WTC11 (cell line): ENCODE measurements at regions of chr17 and their contacts with region 1.

Region 1: GRCh38 chr17:49952209-49952911 is 16.6 kb upstream of the DLX4 start:
- DNase-seq: peak; percentile 95
- ATAC-seq: peak; percentile 94
- H3K4me3 Mint-ChIP-seq: no peak overlapping the region
- H3K27ac Mint-ChIP-seq: no peak overlapping the region
- H3K4me1 Mint-ChIP-seq: peaks cover 10% of the 10 kb centered on the region
- H3K27me3 Mint-ChIP-seq: peaks cover 26% of the 10 kb centered on the region
- CTCF ChIP-seq: peak; percentile 72

Region 2: GRCh38 chr17:49873466-49873865 is 78.9 kb before region 1 on chr17:
- CTCF ChIA-PET with region 1: interaction called, 12 read pairs
- POLR2A ChIA-PET with region 1: interaction called, 3 read pairs
- DNase-seq: no peak
- ATAC-seq: no peak
- H3K4me3 Mint-ChIP-seq: no peak overlapping the region
- H3K27ac Mint-ChIP-seq: peak overlapping the region; percentile 68
- H3K4me1 Mint-ChIP-seq: peaks cover 48% of the 10 kb centered on the region
- H3K27me3 Mint-ChIP-seq: no peaks in the 10 kb centered on the region; the same call in 1 of the 2 replicates
- CTCF ChIP-seq: no peak

Region 3: DNA sequence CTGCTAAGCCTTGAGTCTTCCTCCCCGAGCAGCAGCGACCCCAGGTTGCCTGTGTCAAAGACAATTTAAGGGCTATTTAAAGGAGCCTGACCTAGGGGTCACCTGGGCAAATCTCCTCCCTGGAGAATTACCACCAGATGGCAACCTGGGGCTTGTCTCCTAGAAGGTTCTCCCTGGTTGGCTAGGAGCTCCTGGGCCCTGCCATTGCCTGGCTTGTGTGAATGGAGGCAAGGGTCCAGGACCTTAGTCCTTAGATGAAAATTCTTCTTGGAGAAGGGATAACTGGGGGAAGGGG is 53.2 kb before region 1 on chr17:
- CTCF ChIA-PET with region 1: interaction called, 18 read pairs
- POLR2A ChIA-PET with region 1: no interaction called
- DNase-seq: peak; percentile 69
- ATAC-seq: peak; percentile 89
- H3K4me3 Mint-ChIP-seq: no peak overlapping the region
- H3K27ac Mint-ChIP-seq: no peak overlapping the region
- H3K4me1 Mint-ChIP-seq: peaks cover 26% of the 10 kb centered on the region
- H3K27me3 Mint-ChIP-seq: peaks cover 51% of the 10 kb centered on the region
- CTCF ChIP-seq: no peak

Region 4: DNA sequence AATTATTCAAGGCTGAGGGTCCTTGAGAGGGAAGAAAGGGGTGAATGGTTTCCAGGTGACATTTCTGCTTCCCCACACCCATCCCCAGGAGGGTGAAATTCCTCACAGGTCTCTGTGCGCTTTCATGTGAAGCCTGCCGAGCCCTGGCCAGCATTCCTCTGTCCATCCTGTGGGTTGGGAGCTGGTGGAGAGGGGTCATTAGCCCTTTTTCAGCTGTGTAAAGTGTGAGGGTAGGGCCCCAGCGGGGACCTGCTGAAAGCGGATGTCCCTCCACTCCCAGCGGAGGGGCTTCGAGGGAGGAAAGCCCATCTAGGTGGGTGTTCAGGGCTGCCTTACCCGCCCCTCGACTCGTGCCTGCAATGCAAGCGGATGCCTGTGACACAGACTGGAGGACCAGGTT is 36.7 kb before region 1 on chr17:
- CTCF ChIA-PET with region 1: interaction called, 30 read pairs
- POLR2A ChIA-PET with region 1: no interaction called
- DNase-seq: peak; percentile 38
- ATAC-seq: peak; percentile 56
- H3K4me3 Mint-ChIP-seq: no peak overlapping the region
- H3K27ac Mint-ChIP-seq: no peak overlapping the region
- H3K4me1 Mint-ChIP-seq: peaks cover 22% of the 10 kb centered on the region
- H3K27me3 Mint-ChIP-seq: peaks cover 56% of the 10 kb centered on the region
- CTCF ChIP-seq: no peak

Region 5: GRCh38 chr17:49932138-49932723 is 20.1 kb before region 1 on chr17:
- CTCF ChIA-PET with region 1: interaction called, 11 read pairs
- POLR2A ChIA-PET with region 1: no interaction called
- DNase-seq: no peak
- ATAC-seq: no peak
- H3K4me3 Mint-ChIP-seq: no peak overlapping the region
- H3K27ac Mint-ChIP-seq: no peak overlapping the region
- H3K4me1 Mint-ChIP-seq: peaks cover 12% of the 10 kb centered on the region
- H3K27me3 Mint-ChIP-seq: peaks cover 16% of the 10 kb centered on the region
- CTCF ChIP-seq: no peak

Region 6: DNA sequence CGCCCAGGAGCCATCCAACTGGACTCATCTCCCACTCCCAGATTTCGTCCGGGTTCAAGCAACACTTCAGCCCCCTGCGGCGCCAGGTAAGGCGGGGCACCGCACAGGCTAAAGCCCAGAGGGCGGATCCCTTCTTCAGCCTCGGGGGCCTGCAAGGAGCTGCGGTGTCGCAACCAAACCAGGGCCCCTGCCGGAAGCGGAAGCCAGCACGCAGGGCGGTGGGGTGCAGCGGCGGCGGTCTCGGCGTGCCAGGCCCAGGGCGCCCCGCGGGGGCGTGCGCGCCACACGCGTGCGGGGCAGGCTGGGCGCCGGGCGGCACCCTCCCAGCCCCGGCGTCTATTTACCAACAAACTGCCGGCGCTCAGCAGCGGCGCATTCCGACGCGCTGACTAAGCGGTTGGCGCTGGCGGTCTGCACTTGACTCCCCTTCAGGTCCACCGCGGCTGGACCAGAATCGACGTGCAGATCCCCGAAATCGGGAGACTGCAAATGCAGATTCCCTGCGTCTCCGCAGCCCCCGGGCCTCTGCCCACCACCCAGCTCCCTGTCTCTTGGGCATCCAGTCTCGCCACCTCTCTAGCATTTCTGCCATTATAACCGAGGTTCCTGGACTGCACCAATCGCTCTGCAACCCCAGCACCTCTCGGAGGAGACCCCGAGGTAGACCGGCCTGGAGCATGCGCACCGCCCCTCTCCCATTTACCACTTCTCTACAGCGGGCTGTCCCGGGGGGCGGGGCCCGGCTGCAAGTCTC is 16.2 kb after region 1 on chr17:
- CTCF ChIA-PET with region 1: interaction called, 41 read pairs
- POLR2A ChIA-PET with region 1: no interaction called
- DNase-seq: peak; percentile 95
- ATAC-seq: peak; percentile 72
- H3K4me3 Mint-ChIP-seq: peak overlapping the region; percentile 93
- H3K27ac Mint-ChIP-seq: peak overlapping the region; percentile 95
- H3K4me1 Mint-ChIP-seq: peaks cover 51% of the 10 kb centered on the region
- H3K27me3 Mint-ChIP-seq: peaks cover 99% of the 10 kb centered on the region
- CTCF ChIP-seq: no peak

Region 7: GRCh38 chr17:49987681-49988441 is 35.5 kb after region 1 on chr17:
- CTCF ChIA-PET with region 1: interaction called, 146 read pairs
- POLR2A ChIA-PET with region 1: no interaction called
- DNase-seq: no peak
- ATAC-seq: peak; percentile 48
- H3K4me3 Mint-ChIP-seq: peak overlapping the region; percentile 27; the same call in 1 of the 2 replicates
- H3K27ac Mint-ChIP-seq: no peak overlapping the region
- H3K4me1 Mint-ChIP-seq: peaks cover 21% of the 10 kb centered on the region
- H3K27me3 Mint-ChIP-seq: peaks cover 94% of the 10 kb centered on the region
- CTCF ChIP-seq: no peak

Region 8: GRCh38 chr17:50015146-50015545 is 62.8 kb after region 1 on chr17:
- CTCF ChIA-PET with region 1: no interaction called
- POLR2A ChIA-PET with region 1: no interaction called
- DNase-seq: no peak
- ATAC-seq: no peak
- H3K4me3 Mint-ChIP-seq: no peak overlapping the region
- H3K27ac Mint-ChIP-seq: no peak overlapping the region
- H3K4me1 Mint-ChIP-seq: no peaks in the 10 kb centered on the region
- H3K27me3 Mint-ChIP-seq: peaks cover 41% of the 10 kb centered on the region
- CTCF ChIP-seq: no peak

Region 9: DNA sequence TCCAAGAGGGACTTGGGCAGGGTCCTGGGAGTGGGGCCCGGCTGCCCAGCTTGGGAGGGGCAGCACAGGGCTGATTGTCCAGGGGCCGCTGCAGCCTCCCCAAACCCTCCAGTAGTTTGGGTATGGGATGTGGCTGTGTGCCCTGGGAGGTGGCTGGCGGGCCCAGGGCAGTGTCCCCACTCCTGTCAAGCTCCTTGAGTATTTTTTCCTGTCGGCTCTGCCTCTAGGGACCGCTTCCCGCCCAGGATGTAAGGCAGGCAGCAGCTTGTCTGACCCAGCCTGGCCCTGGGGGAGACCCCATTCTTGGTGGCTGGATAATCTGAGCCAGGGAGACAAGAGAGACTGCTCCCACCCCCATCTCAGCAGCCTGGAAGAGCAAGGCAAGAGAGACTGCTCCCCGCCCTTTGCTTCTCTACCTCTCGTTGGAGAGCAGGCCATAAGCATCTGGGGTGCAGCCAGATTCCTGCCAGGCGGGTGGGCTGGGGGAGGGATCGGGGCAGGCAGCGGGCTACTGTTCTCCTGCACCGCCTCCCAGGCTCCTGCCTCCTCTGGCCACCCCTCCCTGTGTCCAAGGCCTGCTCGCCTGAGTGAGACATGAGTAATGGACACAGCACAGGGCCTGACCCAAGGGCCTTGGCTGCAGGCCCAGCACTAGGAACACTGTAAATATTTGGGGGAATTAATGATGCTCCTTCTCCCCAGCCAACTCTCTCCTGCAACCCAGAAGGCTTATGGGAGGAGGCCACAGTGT is 85.1 kb after region 1 on chr17:
- CTCF ChIA-PET with region 1: no interaction called
- POLR2A ChIA-PET with region 1: no interaction called
- DNase-seq: no peak
- ATAC-seq: peak; percentile 23
- H3K4me3 Mint-ChIP-seq: no peak overlapping the region
- H3K27ac Mint-ChIP-seq: no peak overlapping the region
- H3K4me1 Mint-ChIP-seq: peaks cover 11% of the 10 kb centered on the region
- H3K27me3 Mint-ChIP-seq: peaks cover 5% of the 10 kb centered on the region
- CTCF ChIP-seq: no peak

Region 10: DNA sequence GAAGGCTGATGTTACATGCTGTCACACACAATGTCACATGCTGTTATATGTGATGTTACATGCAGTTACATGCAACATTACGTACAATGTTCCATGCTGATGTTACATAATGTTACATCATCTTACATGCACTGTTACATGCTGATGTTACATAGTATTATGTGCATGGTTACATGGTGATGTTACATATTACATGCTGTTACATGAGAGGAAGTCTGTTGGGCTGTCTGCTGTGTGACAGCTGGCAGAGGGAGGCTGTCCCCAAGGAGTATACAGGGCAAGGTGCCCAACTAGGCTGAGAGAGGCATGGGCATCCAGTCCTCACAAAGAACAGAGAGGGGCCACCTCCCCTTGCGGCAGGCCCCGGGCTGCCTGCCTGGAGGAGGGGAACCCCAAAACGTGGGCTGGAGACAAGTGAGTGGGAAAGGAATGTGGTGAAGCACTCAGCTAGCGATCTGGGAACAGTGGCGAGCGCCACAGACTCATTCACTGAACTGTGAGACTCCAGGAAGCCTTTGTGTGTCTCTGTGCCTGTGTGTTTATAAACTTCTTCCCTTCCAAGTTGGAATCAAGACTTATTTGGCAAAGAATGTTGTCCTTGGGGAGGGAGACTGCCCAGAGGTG is 352.5 kb after region 1 on chr17:
- CTCF ChIA-PET with region 1: no interaction called
- POLR2A ChIA-PET with region 1: no interaction called
- DNase-seq: no peak
- ATAC-seq: no peak
- H3K4me3 Mint-ChIP-seq: no peak overlapping the region
- H3K27ac Mint-ChIP-seq: no peak overlapping the region
- H3K4me1 Mint-ChIP-seq: peaks cover 8% of the 10 kb centered on the region; the same call in 1 of the 2 replicates
- H3K27me3 Mint-ChIP-seq: peaks cover 28% of the 10 kb centered on the region
- CTCF ChIP-seq: no peak